Mammary epithelial cell (primary cell): ENCODE measurements at regions of chr2 and their contacts with region 1.

Region 1: GRCh38 chr2:231104115-231104713 is 20.6 kb downstream of the HTR2B start:
- DNase-seq: peak; percentile 31
- H3K4me3 ChIP-seq: no peak overlapping the region
- H3K27ac ChIP-seq: no peak overlapping the region
- H3K4me1 ChIP-seq: peaks cover 5% of the 10 kb centered on the region
- H3K27me3 ChIP-seq: no peaks in the 10 kb centered on the region
- CTCF ChIP-seq: peak; percentile 81 to 82

Region 2: DNA sequence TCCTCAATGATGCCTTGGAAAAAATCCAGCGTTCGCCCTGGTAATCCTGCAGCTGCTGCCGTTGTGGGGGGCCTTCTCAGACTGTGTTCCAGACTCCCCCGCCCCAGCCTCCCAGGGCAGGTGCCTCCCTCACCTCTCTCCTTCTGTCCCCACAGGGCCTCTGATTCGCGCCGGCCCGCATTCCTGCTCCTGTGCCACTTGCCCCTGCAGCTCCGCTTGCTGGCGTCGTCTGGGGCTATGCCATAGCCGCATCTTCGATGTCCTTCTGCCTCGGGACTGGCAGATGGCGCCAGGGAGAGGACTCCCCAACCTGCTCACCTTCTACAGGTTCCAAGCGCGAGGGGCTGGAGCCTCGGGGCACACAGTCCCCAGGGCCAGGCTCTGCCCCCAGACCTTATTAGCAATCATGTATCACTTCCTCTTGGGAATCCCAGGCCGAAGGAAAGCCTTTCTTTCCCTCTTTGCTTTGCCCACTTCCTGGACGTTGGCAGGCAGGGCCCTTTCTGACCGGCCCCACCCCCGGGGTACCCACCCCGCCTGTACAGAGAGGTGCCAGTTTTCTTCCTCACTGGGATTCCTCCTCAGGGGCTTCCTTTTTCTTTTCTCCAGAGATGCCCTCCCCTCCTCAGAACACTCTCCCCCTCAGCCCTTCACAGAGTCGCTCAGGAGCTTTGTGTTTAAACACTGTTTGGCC is 103.9 kb before region 1 on chr2:
- CTCF ChIA-PET with region 1: no interaction called
- dilution Hi-C with region 1: loop called (anchors 5 kb)
- in situ Hi-C with region 1: no loop called
- intact Hi-C with region 1: no loop called
- DNase-seq: no peak
- H3K4me3 ChIP-seq: no peak overlapping the region
- H3K27ac ChIP-seq: no peak overlapping the region
- H3K4me1 ChIP-seq: no peaks in the 10 kb centered on the region
- H3K27me3 ChIP-seq: no peaks in the 10 kb centered on the region
- CTCF ChIP-seq: peak in 1 of 2 donors; percentile 12

Region 3: GRCh38 chr2:231198291-231199173 is 94.3 kb after region 1 on chr2 and contains the start of gene ARMC9:
- CTCF ChIA-PET with region 1: no interaction called
- dilution Hi-C with region 1: no loop called
- in situ Hi-C with region 1: no loop called
- intact Hi-C with region 1: loop called (anchors 1 kb)
- DNase-seq: peak; percentile 72
- H3K4me3 ChIP-seq: peak within 1 kb of the TSS; percentile 43 to 98 (median 80)
- H3K27ac ChIP-seq: peak within 1 kb of the TSS; percentile 42
- H3K4me1 ChIP-seq: peaks cover 15% of the 10 kb centered on the region
- H3K27me3 ChIP-seq: no peaks in the 10 kb centered on the region
- CTCF ChIP-seq: no peak
- total RNA-seq, gene ARMC9: 25.0 to 43.5 TPM

Region 4: DNA sequence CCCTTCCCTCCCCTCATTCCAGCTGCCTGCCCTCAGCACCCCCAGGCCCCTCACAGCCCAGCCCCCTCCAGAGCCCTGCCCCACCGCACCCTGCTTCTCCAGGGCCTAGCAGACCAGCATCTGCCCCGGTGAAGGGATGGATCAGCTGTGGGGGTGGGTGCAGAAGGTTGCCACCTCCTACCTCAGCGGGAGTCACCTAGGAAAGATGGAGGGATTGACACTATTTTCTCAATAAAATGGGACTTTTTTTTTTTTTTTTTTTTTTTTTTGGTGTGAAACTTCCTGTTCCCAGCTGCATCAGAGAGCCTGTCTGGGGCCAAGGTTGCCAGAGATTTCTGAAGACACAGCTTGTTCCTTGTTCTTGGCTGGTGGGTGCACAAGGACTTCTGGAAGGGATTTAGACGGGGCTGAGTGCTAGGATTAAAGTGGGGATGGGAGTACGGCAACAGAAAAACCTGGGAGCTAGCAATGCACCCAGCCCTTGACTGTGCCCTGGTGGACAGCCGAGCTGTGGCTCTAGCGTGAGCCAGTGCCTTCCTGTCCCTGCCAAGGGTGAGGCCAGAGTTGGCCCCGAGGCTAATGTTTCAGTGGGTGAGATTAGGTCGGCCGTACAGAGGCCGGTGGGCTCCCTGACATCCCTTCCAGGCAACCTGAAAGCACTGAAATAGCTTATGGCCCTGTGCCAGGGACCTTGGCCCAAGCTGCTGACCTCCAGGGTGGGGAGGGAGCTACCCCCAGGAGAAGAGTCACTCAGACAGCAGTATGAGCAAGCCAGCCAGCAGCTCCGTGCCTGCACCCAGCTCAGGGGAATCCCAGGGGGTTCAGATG is 295.9 kb after region 1 on chr2:
- CTCF ChIA-PET with region 1: interaction called, 4 read pairs
- dilution Hi-C with region 1: no loop called
- in situ Hi-C with region 1: no loop called
- intact Hi-C with region 1: loop called (anchors 2 kb)
- DNase-seq: peak; percentile 25
- H3K4me3 ChIP-seq: no peak overlapping the region
- H3K27ac ChIP-seq: no peak overlapping the region
- H3K4me1 ChIP-seq: peaks cover 13% of the 10 kb centered on the region
- H3K27me3 ChIP-seq: peaks cover 8% of the 10 kb centered on the region
- CTCF ChIP-seq: peak; percentile 1 to 18

Region 5: DNA sequence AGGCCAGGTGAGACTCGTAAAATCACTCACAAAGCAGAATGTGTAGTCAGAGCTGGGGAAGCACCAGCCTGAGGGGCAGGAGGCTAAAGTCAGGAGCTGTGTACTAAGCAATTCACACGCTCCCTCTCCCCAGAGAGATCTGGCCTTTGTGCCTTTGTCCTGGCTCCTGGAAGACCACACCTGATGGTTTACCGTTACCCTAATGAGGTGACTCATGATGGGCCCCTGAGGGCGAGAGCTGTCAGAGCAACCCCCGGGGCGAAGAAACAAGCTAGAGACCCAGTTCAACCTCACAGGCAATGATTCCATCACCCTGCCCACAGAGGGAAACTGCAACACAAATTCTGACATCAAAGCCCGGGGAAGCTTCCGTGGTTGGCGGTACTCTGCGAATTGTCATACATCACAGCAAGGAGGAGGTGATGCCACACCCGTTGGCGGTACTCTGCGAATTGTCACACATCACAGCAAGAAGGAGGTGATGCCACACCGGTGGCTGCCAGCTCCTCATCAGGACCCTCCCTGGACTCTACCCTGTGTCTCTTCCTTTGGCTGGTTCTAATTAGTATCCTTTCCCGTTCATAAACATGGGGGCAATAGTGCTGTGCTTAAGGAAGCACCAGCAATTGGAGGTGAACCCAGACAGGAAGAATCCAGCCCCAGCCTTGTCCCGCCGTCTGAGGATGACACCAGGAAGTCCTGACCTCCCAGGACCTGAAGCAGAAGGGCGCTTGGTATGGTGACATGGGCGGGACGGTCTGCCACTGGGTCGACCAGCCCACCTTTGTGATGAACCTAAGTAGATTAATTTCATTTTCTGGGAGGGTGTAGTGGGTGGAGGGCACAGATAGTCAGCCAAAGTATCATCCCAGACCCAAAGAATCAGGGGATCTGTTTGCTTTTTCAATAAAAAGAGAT is 321.9 kb after region 1 on chr2:
- CTCF ChIA-PET with region 1: no interaction called
- dilution Hi-C with region 1: loop called (anchors 5 kb)
- in situ Hi-C with region 1: no loop called
- intact Hi-C with region 1: no loop called
- DNase-seq: peak; percentile 58
- H3K4me3 ChIP-seq: no peak overlapping the region
- H3K27ac ChIP-seq: no peak overlapping the region
- H3K4me1 ChIP-seq: no peaks in the 10 kb centered on the region
- H3K27me3 ChIP-seq: no peaks in the 10 kb centered on the region
- CTCF ChIP-seq: no peak